ENCODE measurements at regions of chr12 and their contacts with region 1.

Region 1: DNA sequence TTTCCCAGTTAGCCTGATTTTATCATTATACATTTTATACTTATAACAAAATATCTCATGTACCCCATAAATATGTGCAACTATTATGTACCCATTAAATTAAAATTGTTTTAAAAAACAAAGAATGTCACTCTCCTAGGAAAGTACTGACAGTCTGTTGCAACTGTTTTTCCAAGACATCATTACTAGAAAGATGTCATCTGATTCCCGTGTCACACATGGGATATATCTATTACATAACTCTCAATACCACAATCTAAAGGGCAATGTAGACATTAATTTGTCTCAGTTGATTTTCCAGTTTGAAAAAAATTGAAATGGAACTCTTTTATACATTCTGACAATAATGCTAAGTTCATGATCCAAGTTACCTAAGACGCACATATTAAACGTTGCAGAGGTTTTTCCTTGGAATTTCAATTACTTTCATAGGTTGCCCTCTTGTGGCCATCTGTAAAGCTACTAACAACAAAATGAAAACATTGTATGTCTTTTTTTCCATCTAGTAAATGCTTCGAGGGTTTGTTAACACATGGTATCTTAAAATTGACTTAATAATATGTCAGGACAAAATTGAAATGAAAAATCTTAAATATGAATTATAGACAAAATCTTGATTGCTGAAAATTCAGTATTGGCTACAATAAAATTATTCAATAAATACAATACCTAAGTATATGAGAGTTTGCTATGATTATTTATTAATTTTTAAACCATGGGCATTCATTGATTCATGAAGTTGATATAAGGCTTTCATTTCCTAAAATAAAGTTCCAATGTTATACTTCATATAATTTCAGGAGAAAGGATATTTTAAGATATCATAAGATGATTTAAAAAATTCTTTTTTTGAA is 131.6 kb downstream of the PPFIA2 start:
- DNase-seq: no peak
- ATAC-seq: peak; percentile 45; the same call in 1 of the 3 replicates
- H3K4me3 ChIP-seq: no peak overlapping the region
- H3K27ac ChIP-seq: no peak overlapping the region
- H3K4me1 ChIP-seq: no peaks in the 10 kb centered on the region
- H3K27me3 ChIP-seq: no peaks in the 10 kb centered on the region
- CTCF ChIP-seq: peak; percentile 41 to 47 (median 41); a peak in 5 of 6 replicates
- EP300 ChIP-seq: no peak
- POLR2A ChIP-seq: no peak
- RAD21 ChIP-seq: peak; percentile 47; the same call in 1 of the 2 replicates

Region 2: GRCh38 chr12:81450920-81451739 is 176.4 kb before region 1 on chr12:
- CTCF ChIA-PET with region 1: interaction called, 6 read pairs
- POLR2A ChIA-PET with region 1: no interaction called
- RAD21 ChIA-PET with region 1: no interaction called
- SMC1A ChIA-PET with region 1: no interaction called
- in situ Hi-C with region 1: no loop called
- intact Hi-C with region 1: loop called (anchors 2 kb)
- DNase-seq: no peak
- ATAC-seq: peak; percentile 75
- H3K4me3 ChIP-seq: no peak overlapping the region
- H3K27ac ChIP-seq: no peak overlapping the region
- H3K4me1 ChIP-seq: no peaks in the 10 kb centered on the region
- H3K27me3 ChIP-seq: no peaks in the 10 kb centered on the region
- CTCF ChIP-seq: peak; percentile 37 to 55 (median 42); a peak in 5 of 6 replicates
- EP300 ChIP-seq: no peak
- POLR2A ChIP-seq: no peak
- RAD21 ChIP-seq: peak; percentile 40

Region 3: GRCh38 chr12:81610955-81611889 is 16.3 kb before region 1 on chr12:
- CTCF ChIA-PET with region 1: interaction called, 27 read pairs
- POLR2A ChIA-PET with region 1: no interaction called
- RAD21 ChIA-PET with region 1: interaction called, 8 read pairs
- SMC1A ChIA-PET with region 1: interaction called, 3 read pairs
- in situ Hi-C with region 1: no loop called
- intact Hi-C with region 1: no loop called
- DNase-seq: no peak
- ATAC-seq: peak; percentile 98
- H3K4me3 ChIP-seq: no peak overlapping the region
- H3K27ac ChIP-seq: no peak overlapping the region
- H3K4me1 ChIP-seq: no peaks in the 10 kb centered on the region
- H3K27me3 ChIP-seq: no peaks in the 10 kb centered on the region
- CTCF ChIP-seq: peak; percentile 34 to 57 (median 54); a peak in 4 of 6 replicates
- EP300 ChIP-seq: no peak
- POLR2A ChIP-seq: no peak
- RAD21 ChIP-seq: 0 out of 2 replicates have a peak, but pooled peaks have one; percentile 19

Measured in GM12878 (cell line).